Natural killer cell (primary cell): ENCODE measurements at regions of chr6 and their contacts with region 1.

Region 1: GRCh38 chr6:150813319-150813992 is 52.0 kb upstream of the MTHFD1L start:
- DNase-seq: peak in 1 of 2 donors; percentile 44
- ATAC-seq: no peak
- H3K4me3 ChIP-seq: no peak overlapping the region
- H3K4me3 Mint-ChIP-seq: no peak overlapping the region
- H3K27ac ChIP-seq: peak overlapping the region; percentile 6
- H3K27ac Mint-ChIP-seq: no peak overlapping the region
- H3K4me1 ChIP-seq: no peaks in the 10 kb centered on the region
- H3K4me1 Mint-ChIP-seq: no peaks in the 10 kb centered on the region
- H3K27me3 ChIP-seq: no peaks in the 10 kb centered on the region
- H3K27me3 Mint-ChIP-seq: peaks cover 13 to 15% of the 10 kb centered on the region in 2 donors
- CTCF ChIP-seq: no peak

Region 2: GRCh38 chr6:150417899-150418826 is 395.3 kb before region 1 on chr6:
- intact Hi-C with region 1: loop called (anchors 1 kb)
- DNase-seq: peak in 1 of 2 donors; percentile 74
- ATAC-seq: peak; percentile 68 to 81 (median 75)
- H3K4me3 ChIP-seq: peak overlapping the region; percentile 35
- H3K4me3 Mint-ChIP-seq: peak overlapping the region; percentile 62
- H3K27ac ChIP-seq: no peak overlapping the region
- H3K27ac Mint-ChIP-seq: peak overlapping the region in 1 of 2 donors; percentile 9
- H3K4me1 ChIP-seq: peaks cover 10% of the 10 kb centered on the region
- H3K4me1 Mint-ChIP-seq: peaks cover 25 to 26% of the 10 kb centered on the region in 2 donors
- H3K27me3 ChIP-seq: peaks cover 7% of the 10 kb centered on the region
- H3K27me3 Mint-ChIP-seq: peaks cover 22 to 36% of the 10 kb centered on the region in 2 donors
- CTCF ChIP-seq: peak; percentile 45

Region 3: GRCh38 chr6:151004415-151005024 is 191.1 kb after region 1 on chr6:
- intact Hi-C with region 1: no loop called
- DNase-seq: no peak
- ATAC-seq: no peak
- H3K4me3 ChIP-seq: no peak overlapping the region
- H3K4me3 Mint-ChIP-seq: no peak overlapping the region
- H3K27ac ChIP-seq: no peak overlapping the region
- H3K27ac Mint-ChIP-seq: peak overlapping the region in 1 of 2 donors; percentile 25
- H3K4me1 ChIP-seq: no peaks in the 10 kb centered on the region
- H3K4me1 Mint-ChIP-seq: peaks cover 5 to 13% of the 10 kb centered on the region in 2 donors
- H3K27me3 ChIP-seq: no peaks in the 10 kb centered on the region
- H3K27me3 Mint-ChIP-seq: no peaks in the 10 kb centered on the region
- CTCF ChIP-seq: no peak

Region 4: GRCh38 chr6:151119823-151120524 is 306.5 kb after region 1 on chr6:
- intact Hi-C with region 1: no loop called
- DNase-seq: no peak
- ATAC-seq: no peak
- H3K4me3 ChIP-seq: no peak overlapping the region
- H3K4me3 Mint-ChIP-seq: no peak overlapping the region
- H3K27ac ChIP-seq: no peak overlapping the region
- H3K27ac Mint-ChIP-seq: no peak overlapping the region
- H3K4me1 ChIP-seq: no peaks in the 10 kb centered on the region
- H3K4me1 Mint-ChIP-seq: peaks cover 0 to 7% of the 10 kb centered on the region in 2 donors
- H3K27me3 ChIP-seq: no peaks in the 10 kb centered on the region
- H3K27me3 Mint-ChIP-seq: no peaks in the 10 kb centered on the region
- CTCF ChIP-seq: no peak